ENCODE measurements at regions of chr11 and their contacts with region 1.

Region 1: DNA sequence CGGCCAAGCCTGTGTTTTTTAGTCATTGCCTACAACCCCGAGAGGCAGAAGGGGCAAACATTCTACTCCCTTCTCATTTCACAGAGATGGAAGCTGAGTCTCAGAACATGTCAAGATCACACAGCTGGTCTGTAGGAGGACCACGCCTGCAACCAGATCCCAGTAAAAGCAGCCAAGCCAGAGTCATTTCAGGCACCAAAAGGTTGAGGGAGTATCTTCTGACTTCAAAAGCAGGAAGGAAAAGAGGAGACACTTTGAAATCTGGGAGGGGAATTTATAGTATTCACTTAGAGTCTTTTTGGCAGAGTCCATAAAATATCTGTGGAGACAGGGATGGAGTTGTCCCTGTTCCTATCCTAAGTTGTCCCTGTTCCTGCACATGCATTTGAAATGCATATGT is 17.9 kb upstream of the ZDHHC13 start:
- DNase-seq: no peak
- H3K4me3 ChIP-seq: no peak overlapping the region
- H3K27ac ChIP-seq: no peak overlapping the region
- H3K4me1 ChIP-seq: no peaks in the 10 kb centered on the region
- H3K27me3 ChIP-seq: no peaks in the 10 kb centered on the region
- CTCF ChIP-seq: no peak
- EP300 ChIP-seq: no peak
- POLR2A ChIP-seq: no peak

Region 2: GRCh38 chr11:18986744-18987143 is 112.3 kb before region 1 on chr11:
- intact Hi-C with region 1: no loop called
- DNase-seq: no peak
- H3K4me3 ChIP-seq: no peak overlapping the region
- H3K27ac ChIP-seq: no peak overlapping the region
- H3K4me1 ChIP-seq: no peaks in the 10 kb centered on the region
- H3K27me3 ChIP-seq: no peaks in the 10 kb centered on the region
- CTCF ChIP-seq: no peak
- EP300 ChIP-seq: no peak
- POLR2A ChIP-seq: no peak

Region 3: GRCh38 chr11:20342347-20343141 is 1243.5 kb after region 1 on chr11:
- intact Hi-C with region 1: loop called in 1 of 4 experiments (anchors 5 kb)
- DNase-seq: no peak
- H3K4me3 ChIP-seq: no peak overlapping the region
- H3K27ac ChIP-seq: no peak overlapping the region
- H3K4me1 ChIP-seq: no peaks in the 10 kb centered on the region
- H3K27me3 ChIP-seq: no peaks in the 10 kb centered on the region
- CTCF ChIP-seq: no peak
- EP300 ChIP-seq: no peak
- POLR2A ChIP-seq: no peak

Region 4: DNA sequence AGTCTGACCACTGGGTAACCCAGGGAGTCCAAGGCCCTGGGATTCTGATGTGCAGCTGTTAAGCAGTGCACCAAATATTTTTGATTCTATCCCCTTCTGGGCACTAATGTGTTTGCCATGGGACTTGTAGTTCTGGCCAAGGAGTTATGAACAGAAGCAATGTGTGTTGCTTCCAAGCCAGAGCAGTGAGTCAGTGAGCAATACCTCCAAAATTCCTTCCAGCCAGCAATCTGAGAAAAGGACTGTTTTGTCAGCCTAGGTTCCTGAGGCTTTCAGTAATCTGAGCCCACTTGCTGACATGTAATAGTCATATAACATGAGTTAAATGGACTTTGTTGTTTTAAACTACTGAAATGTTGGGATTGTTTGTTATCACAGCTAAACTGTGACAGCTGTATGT is 1881.6 kb after region 1 on chr11:
- intact Hi-C with region 1: no loop called
- DNase-seq: no peak
- H3K4me3 ChIP-seq: no peak overlapping the region
- H3K27ac ChIP-seq: no peak overlapping the region
- H3K4me1 ChIP-seq: no peaks in the 10 kb centered on the region
- H3K27me3 ChIP-seq: no peaks in the 10 kb centered on the region
- CTCF ChIP-seq: no peak
- EP300 ChIP-seq: no peak
- POLR2A ChIP-seq: no peak